ENCODE measurements at regions of chr15 and their contacts with region 1.

Region 1: GRCh38 chr15:60585743-60586708 is 107.1 kb upstream of the ICE2 start:
- DNase-seq: no peak
- H3K4me3 ChIP-seq: no peak overlapping the region
- H3K27ac ChIP-seq: peak overlapping the region; percentile 10 to 68 (median 40)
- H3K4me1 ChIP-seq: peaks cover 10 to 92% (median 22%) of the 10 kb centered on the region in 3 donors
- H3K27me3 ChIP-seq: no peaks in the 10 kb centered on the region
- CTCF ChIP-seq: peak; percentile 85 to 96 (median 88)
- POLR2A ChIP-seq: no peak

Region 2: DNA sequence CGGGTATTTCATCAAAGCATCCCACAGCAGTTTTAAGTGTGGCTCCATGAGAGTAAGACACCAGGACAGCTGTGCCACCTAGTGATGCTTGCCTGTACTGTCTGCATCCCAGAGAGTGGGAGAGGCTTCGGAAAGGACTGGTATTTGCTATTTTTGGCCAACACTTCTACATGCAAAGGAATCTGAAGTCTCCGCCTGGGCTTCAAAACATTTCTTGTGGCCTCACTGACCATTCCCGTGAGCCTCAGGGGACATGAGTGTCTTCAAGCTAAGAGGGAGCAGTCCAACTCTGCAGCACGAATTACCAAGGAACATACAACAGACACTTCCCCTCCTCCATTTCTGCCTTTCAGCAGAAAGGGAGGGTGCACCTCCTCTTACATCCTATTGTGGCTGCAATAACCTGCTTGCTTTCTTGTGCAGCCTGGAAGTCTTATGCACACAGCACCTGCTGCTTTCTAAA is 465.6 kb after region 1 on chr15:
- intact Hi-C with region 1: loop called (anchors 10 kb)
- DNase-seq: no peak
- H3K4me3 ChIP-seq: no peak overlapping the region
- H3K27ac ChIP-seq: no peak overlapping the region
- H3K4me1 ChIP-seq: peaks cover 0 to 21% (median 0%) of the 10 kb centered on the region in 3 donors
- H3K27me3 ChIP-seq: no peaks in the 10 kb centered on the region
- CTCF ChIP-seq: peak in 4 of 6 experiments; percentile 36 to 57 (median 39)
- POLR2A ChIP-seq: no peak

Measured in esophagus squamous epithelium (tissue), 5 donors.